ENCODE measurements at regions of chr19 and their contacts with region 1.

Region 1: DNA sequence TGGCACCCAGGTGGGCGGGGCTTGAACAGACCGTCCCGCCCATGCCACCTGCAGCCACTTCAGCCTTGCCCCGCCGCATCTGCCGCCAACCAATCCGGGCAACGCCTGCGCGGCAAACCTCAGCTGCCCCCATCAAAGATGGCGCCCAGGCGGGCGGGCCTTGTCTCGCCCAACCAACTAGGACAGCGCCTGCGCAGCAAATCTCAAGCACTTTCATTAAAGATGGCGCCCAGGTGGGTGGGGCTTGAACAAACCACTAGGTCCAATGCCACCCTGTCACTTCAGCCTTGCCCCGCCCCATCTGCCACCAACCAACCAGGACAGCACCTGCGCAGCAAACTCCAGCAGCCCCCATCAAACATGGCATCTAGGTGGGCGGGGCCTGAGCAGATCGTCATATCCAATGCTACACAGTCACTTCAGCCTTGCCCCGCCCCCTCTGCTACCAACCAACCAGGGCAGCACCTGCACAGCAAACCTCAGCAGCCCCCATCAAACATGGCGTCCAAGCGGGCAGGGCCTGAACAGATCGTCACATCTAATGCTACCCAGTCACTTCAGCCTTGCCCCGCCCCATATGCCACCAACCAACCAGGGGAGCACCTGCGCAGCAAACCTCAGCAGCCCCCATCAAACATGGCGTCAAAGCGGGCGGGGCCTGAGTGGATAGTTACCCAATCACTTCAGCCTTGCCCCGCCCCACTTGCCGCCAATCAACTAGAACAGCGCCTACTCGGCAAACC is 1.4 kb downstream of the PEG3 start:
- DNase-seq: peak; percentile 97
- H3K4me3 ChIP-seq: peak overlapping the region; percentile 77
- H3K27ac ChIP-seq: peak overlapping the region; percentile 95
- H3K4me1 ChIP-seq: peaks cover 7% of the 10 kb centered on the region
- H3K27me3 ChIP-seq: no peaks in the 10 kb centered on the region
- CTCF ChIP-seq: no peak

Region 2: GRCh38 chr19:56748378-56748777 is 90.7 kb before region 1 on chr19:
- CTCF ChIA-PET with region 1: no interaction called
- POLR2A ChIA-PET with region 1: no interaction called
- intact Hi-C with region 1: loop called (anchors 1 kb)
- DNase-seq: peak; percentile 52
- H3K4me3 ChIP-seq: no peak overlapping the region
- H3K27ac ChIP-seq: no peak overlapping the region
- H3K4me1 ChIP-seq: peaks cover 11% of the 10 kb centered on the region
- H3K27me3 ChIP-seq: no peaks in the 10 kb centered on the region
- CTCF ChIP-seq: peak; percentile 64

Region 3: DNA sequence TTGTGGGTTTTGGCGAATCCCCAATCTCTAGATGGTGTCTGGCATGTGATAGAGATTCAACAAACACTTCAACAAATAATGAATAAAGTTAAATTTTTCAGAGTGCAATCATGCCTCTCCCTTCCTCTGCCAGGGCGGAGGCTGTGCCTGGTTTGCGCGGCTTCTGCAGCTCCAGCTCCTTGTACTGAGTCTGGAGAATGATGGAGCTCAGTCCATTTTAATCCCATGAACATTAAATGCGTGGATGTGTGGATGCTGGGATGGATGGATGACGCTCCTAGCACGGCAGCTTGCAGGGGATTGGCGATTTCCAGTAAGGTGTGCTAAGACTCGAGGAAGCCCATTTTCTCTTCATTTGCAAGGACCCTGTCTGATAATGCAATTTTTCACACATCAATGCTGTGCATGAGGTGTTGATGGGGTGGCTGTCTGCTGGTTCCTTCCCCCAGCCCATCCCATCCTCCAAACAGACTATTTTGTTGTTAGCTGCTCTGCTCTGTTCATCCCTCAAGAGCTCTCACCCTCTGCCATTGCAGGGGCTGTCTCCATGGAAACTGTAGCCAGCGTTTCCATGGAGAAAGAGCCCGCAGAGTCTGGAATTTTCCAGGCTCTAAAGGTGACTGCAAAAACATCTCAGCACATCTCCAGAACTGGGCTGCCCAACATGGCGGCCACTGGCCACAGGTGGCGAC is 94.1 kb after region 1 on chr19:
- CTCF ChIA-PET with region 1: no interaction called
- POLR2A ChIA-PET with region 1: no interaction called
- intact Hi-C with region 1: no loop called
- DNase-seq: no peak
- H3K4me3 ChIP-seq: no peak overlapping the region
- H3K27ac ChIP-seq: no peak overlapping the region
- H3K4me1 ChIP-seq: no peaks in the 10 kb centered on the region
- H3K27me3 ChIP-seq: no peaks in the 10 kb centered on the region
- CTCF ChIP-seq: no peak

Region 4: DNA sequence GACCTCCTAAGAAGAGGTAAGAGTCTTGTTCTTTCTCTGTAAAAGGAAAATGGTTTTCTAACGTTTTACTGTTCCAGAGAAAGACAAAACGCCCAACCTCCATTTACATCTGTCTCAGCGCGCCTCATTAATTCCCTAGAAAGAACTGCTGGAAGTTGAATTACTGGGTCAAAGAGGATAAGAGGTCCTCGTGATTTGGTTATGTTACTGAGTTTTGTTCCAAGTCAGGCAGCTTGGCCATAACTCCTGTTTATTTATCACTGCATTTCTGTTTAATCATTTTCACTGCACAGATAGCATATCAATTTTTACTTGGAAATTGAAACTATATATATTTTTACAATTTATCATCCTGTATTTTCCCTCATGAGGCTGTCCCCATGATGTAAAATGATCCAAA is 114.4 kb after region 1 on chr19:
- CTCF ChIA-PET with region 1: no interaction called
- POLR2A ChIA-PET with region 1: no interaction called
- intact Hi-C with region 1: no loop called
- DNase-seq: no peak
- H3K4me3 ChIP-seq: no peak overlapping the region
- H3K27ac ChIP-seq: no peak overlapping the region
- H3K4me1 ChIP-seq: peaks cover under 1% of the 10 kb centered on the region
- H3K27me3 ChIP-seq: no peaks in the 10 kb centered on the region
- CTCF ChIP-seq: no peak

Region 5: DNA sequence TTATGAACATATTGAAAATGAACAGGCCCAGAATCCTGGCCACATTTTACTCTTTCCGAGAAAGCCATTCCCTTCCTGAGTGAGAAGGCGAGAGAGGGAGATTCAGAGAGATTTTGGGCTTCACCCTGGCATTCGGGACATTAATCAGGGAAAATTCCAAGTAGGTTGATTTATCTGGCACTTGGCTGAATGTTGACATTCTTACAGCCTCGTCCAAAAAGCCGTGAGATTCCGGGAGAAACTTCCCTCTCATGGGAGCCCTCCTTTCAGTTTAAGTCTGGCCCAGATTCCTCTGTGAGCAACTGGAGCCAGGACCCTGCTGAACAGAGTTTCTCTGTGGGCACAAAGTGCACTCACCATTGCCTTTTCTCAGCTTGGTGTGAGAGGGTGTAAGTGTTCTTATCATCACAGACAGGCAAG is 130.7 kb after region 1 on chr19:
- CTCF ChIA-PET with region 1: no interaction called
- POLR2A ChIA-PET with region 1: no interaction called
- intact Hi-C with region 1: loop called (anchors 1 kb)
- DNase-seq: peak; percentile 68
- H3K4me3 ChIP-seq: no peak overlapping the region
- H3K27ac ChIP-seq: peak overlapping the region; percentile 94
- H3K4me1 ChIP-seq: peaks cover 29% of the 10 kb centered on the region
- H3K27me3 ChIP-seq: no peaks in the 10 kb centered on the region
- CTCF ChIP-seq: no peak

Measured in A673 (cell line).